Activated B cell treated with CpG ODN at 0.5 μM for 24 hours (primary cell): ENCODE measurements at regions of chr1 and their contacts with region 1.

Region 1: DNA sequence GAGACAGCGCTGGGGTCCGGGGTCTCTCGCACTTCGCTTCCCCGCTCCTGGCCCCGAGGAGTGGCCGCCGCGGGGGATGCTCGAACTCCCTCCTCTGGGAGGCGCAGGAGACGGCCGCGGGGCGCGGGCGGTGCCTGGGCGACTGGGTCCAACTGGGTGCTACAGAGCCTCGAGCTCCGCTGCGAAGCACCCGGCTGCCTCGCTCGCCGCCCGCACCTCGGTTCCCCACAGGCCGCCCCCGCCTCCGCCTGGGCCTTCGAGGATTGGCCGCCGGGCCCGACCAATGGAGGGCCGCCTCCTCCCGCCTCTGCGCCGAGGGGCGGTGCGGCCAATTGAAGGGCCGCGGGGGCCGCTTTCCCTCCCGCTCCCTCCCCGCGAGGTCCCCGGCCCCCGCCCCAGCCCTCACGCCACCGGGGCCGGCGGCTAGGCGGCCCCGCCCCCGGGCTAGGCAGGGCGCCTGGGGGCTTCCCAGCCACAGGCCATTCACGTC is at the start of gene CNN3:
- DNase-seq: peak; percentile 74
- ATAC-seq: peak; percentile 87
- H3K4me3 Mint-ChIP-seq: peak within 1 kb of the TSS; percentile 86
- H3K27ac Mint-ChIP-seq: peak within 1 kb of the TSS; percentile 86
- H3K4me1 Mint-ChIP-seq: peaks cover 30% of the 10 kb centered on the region
- H3K27me3 Mint-ChIP-seq: peaks cover 15% of the 10 kb centered on the region
- CTCF ChIP-seq: no peak
- total RNA-seq, gene CNN3: 6.2 and 11.8 TPM in 2 replicates

Region 2: GRCh38 chr1:93909146-93910050 is 1017.6 kb before region 1 on chr1 and contains the start of gene GCLM:
- CTCF ChIA-PET with region 1: no interaction called
- POLR2A ChIA-PET with region 1: no interaction called
- intact Hi-C with region 1: loop called (anchors 5 kb)
- DNase-seq: peak; percentile 95
- ATAC-seq: peak; percentile 92
- H3K4me3 Mint-ChIP-seq: peak within 1 kb of the TSS; percentile 89
- H3K27ac Mint-ChIP-seq: peak within 1 kb of the TSS; percentile 87
- H3K4me1 Mint-ChIP-seq: peaks cover 25% of the 10 kb centered on the region
- H3K27me3 Mint-ChIP-seq: no peaks in the 10 kb centered on the region
- CTCF ChIP-seq: peak; percentile 48
- total RNA-seq, gene GCLM: 8.6 and 9.6 TPM in 2 replicates

Region 3: DNA sequence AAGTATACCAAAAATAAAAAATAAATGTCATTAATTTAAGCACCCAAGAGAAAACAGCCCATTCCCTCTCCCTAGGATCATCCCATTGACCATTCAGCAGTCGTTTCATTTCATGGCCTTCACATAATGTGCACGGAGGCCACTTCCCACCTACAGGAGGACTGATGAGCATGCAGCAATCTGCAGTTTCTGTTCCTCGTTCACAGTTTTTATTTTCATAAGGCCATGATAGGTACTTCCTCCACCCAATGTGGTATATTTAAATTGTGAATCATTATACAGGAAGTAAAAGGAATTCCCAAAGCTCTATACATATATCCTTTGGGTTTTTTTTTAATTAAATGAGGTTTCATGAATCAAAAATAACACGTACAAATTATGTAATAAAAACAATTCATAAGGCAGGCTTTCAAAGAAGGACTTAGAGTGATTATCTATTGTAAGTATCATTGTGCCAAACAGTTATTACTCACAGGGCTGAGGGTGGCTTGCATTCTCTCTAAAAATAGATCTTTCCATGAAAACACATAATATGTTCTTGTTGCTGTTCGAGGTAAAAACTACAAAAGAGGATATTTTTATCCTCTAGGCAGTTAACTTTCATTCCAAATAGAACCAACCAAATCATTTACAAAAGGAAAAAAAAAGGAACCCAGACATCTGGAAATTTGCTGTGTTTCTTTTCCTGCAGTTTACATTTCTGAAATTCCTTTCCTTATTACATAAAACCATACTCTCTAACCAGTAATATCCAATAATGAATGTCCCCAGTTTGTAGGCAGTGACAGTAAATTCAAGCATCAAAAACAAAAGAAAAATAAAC is 134.3 kb before region 1 on chr1:
- CTCF ChIA-PET with region 1: no interaction called
- POLR2A ChIA-PET with region 1: no interaction called
- intact Hi-C with region 1: loop called (anchors 10 kb)
- DNase-seq: no peak
- ATAC-seq: peak; percentile 92
- H3K4me3 Mint-ChIP-seq: peak overlapping the region; percentile 58
- H3K27ac Mint-ChIP-seq: peak overlapping the region; percentile 46
- H3K4me1 Mint-ChIP-seq: peaks cover 49% of the 10 kb centered on the region
- H3K27me3 Mint-ChIP-seq: no peaks in the 10 kb centered on the region
- CTCF ChIP-seq: no peak

Region 4: DNA sequence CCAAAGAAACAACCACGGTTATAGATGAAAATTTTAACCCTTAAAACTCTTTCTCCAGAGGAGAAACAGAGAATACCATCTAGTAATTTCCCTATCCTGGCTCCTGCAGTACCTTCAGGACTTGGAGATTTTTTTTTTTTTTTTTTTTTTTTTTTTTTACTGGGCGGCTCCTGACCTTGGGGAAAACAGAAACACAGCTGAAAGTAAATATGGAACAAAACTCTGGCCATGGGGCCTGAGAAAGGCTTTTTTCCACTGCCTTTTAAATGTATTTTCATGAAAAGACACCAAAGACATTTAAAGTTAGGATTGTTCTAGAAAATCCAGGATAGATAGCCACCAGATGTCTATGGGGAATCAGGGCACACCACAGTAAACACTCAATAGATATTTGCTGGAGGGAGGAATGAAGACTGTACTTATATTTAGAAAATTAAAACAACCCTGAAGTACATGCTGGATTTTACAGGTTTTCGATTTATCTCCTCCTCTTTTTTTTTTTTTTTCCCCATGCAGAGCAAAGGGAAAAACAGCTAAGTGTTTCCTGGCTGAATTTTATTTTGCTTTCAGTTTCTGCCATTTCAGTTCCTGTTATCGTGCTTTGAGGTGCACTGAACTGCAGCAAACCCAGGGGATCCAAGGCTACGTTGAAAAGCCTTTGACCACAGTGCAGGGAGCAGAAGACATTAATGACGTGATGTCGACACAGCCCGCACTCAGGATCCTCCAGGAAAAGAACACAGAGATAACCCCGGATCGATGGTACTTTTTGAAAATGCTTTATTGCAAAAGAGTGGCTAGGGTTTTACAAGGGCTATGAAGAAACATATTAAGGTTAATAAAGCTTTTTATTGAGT is 35.7 kb after region 1 on chr1:
- CTCF ChIA-PET with region 1: interaction called, 3 read pairs
- POLR2A ChIA-PET with region 1: interaction called, 4 read pairs
- intact Hi-C with region 1: loop called (anchors 1 kb)
- DNase-seq: peak; percentile 17
- ATAC-seq: peak; percentile 96
- H3K4me3 Mint-ChIP-seq: peak overlapping the region; percentile 84
- H3K27ac Mint-ChIP-seq: peak overlapping the region; percentile 94
- H3K4me1 Mint-ChIP-seq: peaks cover 29% of the 10 kb centered on the region
- H3K27me3 Mint-ChIP-seq: no peaks in the 10 kb centered on the region
- CTCF ChIP-seq: no peak

Region 5: GRCh38 chr1:95013950-95014574 is 87.1 kb after region 1 on chr1:
- CTCF ChIA-PET with region 1: no interaction called
- POLR2A ChIA-PET with region 1: no interaction called
- intact Hi-C with region 1: no loop called
- DNase-seq: no peak
- ATAC-seq: no peak
- H3K4me3 Mint-ChIP-seq: no peak overlapping the region
- H3K27ac Mint-ChIP-seq: no peak overlapping the region
- H3K4me1 Mint-ChIP-seq: peaks cover 6% of the 10 kb centered on the region
- H3K27me3 Mint-ChIP-seq: no peaks in the 10 kb centered on the region
- CTCF ChIP-seq: no peak

Region 6: DNA sequence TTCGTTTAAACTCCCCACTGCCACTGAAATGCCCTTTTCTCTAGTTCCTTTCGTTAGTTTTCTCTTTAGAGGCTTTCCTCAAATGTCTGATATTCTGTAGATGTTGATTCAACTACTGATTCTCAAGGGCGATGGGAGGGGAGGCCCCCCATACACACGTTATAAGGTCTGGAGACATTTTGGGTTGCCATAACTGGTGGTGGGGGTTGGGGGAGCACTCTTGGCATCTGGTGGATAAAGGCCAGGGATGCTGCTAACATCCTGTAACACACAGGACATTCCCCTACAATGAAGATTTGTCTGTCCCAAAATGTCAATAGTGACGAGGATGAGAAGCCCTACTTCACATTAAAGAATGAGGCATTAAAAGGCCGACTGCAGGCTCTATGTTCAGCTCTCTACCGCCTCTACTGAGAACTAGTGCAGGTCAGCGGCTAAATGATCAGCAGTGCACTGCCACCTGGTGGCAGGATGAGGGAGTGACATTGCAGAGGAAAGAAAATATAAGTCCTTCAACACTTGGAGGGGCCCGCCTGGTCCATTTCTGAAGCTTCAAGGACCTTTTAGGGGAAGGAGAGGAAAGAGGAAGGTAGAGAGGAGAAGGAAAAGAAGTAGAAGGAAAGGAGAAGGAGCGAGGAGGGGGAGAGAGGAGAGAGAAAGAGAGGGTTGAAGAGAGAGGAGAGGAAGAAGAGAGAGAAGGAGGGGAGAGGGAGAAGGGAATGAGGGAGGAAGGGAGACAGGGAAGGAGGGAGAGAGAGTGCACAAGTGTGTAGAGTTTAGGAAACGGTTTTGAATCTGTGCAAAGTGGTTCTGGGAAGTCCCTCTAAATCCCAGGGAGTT is 116.4 kb after region 1 on chr1:
- CTCF ChIA-PET with region 1: interaction called, 5 read pairs
- POLR2A ChIA-PET with region 1: no interaction called
- intact Hi-C with region 1: loop called (anchors 2 kb)
- DNase-seq: peak; percentile 65
- ATAC-seq: peak; percentile 98
- H3K4me3 Mint-ChIP-seq: no peak overlapping the region
- H3K27ac Mint-ChIP-seq: no peak overlapping the region
- H3K4me1 Mint-ChIP-seq: no peaks in the 10 kb centered on the region
- H3K27me3 Mint-ChIP-seq: no peaks in the 10 kb centered on the region
- CTCF ChIP-seq: peak; percentile 97